CD14-positive monocyte (primary cell): ENCODE measurements at regions of chr11 and their contacts with region 1.

Region 1: GRCh38 chr11:18731949-18732821 is 6.2 kb upstream of the IGSF22 start:
- DNase-seq: peak; percentile 27 to 54 (median 42)
- H3K4me3 ChIP-seq: no peak overlapping the region
- H3K4me3 Mint-ChIP-seq: no peak overlapping the region
- H3K27ac ChIP-seq: no peak overlapping the region
- H3K27ac Mint-ChIP-seq: peak overlapping the region in 1 of 7 donors; percentile 31
- H3K4me1 ChIP-seq: no peaks in the 10 kb centered on the region
- H3K4me1 Mint-ChIP-seq: peaks cover 4% of the 10 kb centered on the region
- H3K27me3 ChIP-seq: no peaks in the 10 kb centered on the region
- H3K27me3 Mint-ChIP-seq: peaks cover 0 to 7% (median 2%) of the 10 kb centered on the region in 3 donors
- CTCF ChIP-seq: peak; percentile 97

Region 2: GRCh38 chr11:18115360-18116127 is 616.6 kb before region 1 on chr11:
- intact Hi-C with region 1: loop called in 1 of 2 experiments (anchors 5 kb)
- DNase-seq: peak; percentile 34 to 55 (median 55)
- H3K4me3 ChIP-seq: no peak overlapping the region
- H3K4me3 Mint-ChIP-seq: peak overlapping the region in 1 of 2 donors; percentile 40
- H3K27ac ChIP-seq: no peak overlapping the region
- H3K27ac Mint-ChIP-seq: peak overlapping the region in 1 of 7 donors; percentile 33
- H3K4me1 ChIP-seq: no peaks in the 10 kb centered on the region
- H3K4me1 Mint-ChIP-seq: peaks cover 3% of the 10 kb centered on the region
- H3K27me3 ChIP-seq: peaks cover 10% of the 10 kb centered on the region in 2 donors
- H3K27me3 Mint-ChIP-seq: peaks cover 11 to 31% (median 11%) of the 10 kb centered on the region in 3 donors
- CTCF ChIP-seq: peak; percentile 92